ENCODE measurements at regions of chr9 and their contacts with region 1.

Region 1: GRCh38 chr9:28378231-28378630 is 805.0 kb upstream of the C9orf72 start:
- H3K4me3 Mint-ChIP-seq: no peak overlapping the region
- H3K27ac Mint-ChIP-seq: no peak overlapping the region
- H3K4me1 Mint-ChIP-seq: no peaks in the 10 kb centered on the region
- H3K27me3 Mint-ChIP-seq: no peaks in the 10 kb centered on the region

Region 2: GRCh38 chr9:28179893-28180292 is 198.3 kb before region 1 on chr9:
- intact Hi-C with region 1: no loop called
- H3K4me3 Mint-ChIP-seq: no peak overlapping the region
- H3K27ac Mint-ChIP-seq: no peak overlapping the region
- H3K4me1 Mint-ChIP-seq: no peaks in the 10 kb centered on the region
- H3K27me3 Mint-ChIP-seq: no peaks in the 10 kb centered on the region

Region 3: DNA sequence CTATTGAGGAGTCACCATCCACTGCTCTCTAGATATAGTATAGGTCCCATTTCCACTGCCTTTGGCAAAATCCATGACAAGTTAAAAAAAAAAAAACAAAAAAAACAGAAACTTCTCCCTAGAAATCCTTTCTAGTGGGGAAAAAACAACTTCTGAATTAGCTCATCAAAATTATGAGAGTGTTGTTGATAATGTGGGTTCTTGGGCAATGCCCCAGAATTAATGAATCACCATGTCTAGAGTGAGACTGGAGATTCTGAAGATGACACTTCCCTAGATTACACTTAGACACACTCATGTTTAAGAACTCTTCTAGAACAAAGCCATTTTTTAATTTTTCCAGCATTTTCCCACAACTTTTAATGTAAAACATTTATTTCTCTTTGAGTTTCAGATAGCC is 77.0 kb before region 1 on chr9:
- intact Hi-C with region 1: no loop called
- H3K4me3 Mint-ChIP-seq: no peak overlapping the region
- H3K27ac Mint-ChIP-seq: no peak overlapping the region
- H3K4me1 Mint-ChIP-seq: no peaks in the 10 kb centered on the region
- H3K27me3 Mint-ChIP-seq: no peaks in the 10 kb centered on the region

Region 4: GRCh38 chr9:28329323-28329722 is 48.9 kb before region 1 on chr9:
- intact Hi-C with region 1: loop called (anchors 1 kb)
- H3K4me3 Mint-ChIP-seq: no peak overlapping the region
- H3K27ac Mint-ChIP-seq: no peak overlapping the region
- H3K4me1 Mint-ChIP-seq: no peaks in the 10 kb centered on the region
- H3K27me3 Mint-ChIP-seq: no peaks in the 10 kb centered on the region